Activated CD8-positive, alpha-beta T cell treated with anti-CD3 and anti-CD28 coated beads for 36 hours (primary cell): ENCODE measurements at regions of chr12 and their contacts with region 1.

Region 1: GRCh38 chr12:114508529-114509129 is 102.7 kb upstream of the TBX5 start:
- DNase-seq: peak; percentile 84
- ATAC-seq: no peak
- H3K4me3 Mint-ChIP-seq: no peak overlapping the region
- H3K27ac Mint-ChIP-seq: no peak overlapping the region
- H3K4me1 Mint-ChIP-seq: no peaks in the 10 kb centered on the region
- H3K27me3 Mint-ChIP-seq: peaks cover 17% of the 10 kb centered on the region
- CTCF ChIP-seq: peak; percentile 66

Region 2: DNA sequence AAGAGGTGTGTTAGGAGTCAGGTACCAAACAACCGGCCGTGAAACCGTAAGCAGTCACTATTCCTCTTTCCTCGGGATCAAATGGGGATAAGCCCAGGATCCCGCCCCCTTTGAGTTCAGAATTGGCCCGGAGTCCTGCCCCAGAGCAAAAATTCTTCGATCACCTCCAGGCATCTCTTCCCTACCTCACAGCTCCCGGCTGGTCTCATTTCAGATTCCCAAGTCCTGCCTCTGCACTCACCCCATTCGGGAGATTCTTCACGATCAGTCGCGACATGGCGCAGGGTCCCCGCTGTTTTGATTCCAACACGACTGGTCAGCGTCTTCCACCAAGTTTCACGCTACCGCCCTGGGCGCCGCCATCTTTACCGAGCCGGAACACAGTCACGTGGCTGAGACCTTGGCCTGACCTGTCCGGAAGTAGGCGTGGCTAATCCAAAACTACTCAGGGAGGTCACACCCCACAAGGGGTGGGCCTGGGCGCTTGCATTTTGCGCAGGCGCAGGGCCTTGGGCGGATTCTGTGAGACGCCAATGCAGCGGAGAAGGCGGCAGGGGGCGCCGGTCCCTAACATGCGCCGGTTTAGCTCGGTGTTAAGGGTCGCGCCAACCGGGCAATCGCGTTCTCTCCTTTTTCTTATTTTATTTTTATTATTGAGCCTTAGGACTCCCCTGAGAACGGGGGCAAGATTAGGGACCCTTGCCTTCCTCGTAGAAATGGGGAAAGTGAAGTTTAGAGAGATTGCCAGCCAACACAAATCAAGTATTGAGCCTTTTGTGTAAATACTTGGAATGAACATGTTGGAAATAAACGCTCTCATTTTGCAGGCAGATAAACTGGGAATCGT is 542.5 kb before region 1 on chr12 and contains the start of gene RBM19:
- CTCF ChIA-PET with region 1: interaction called, 21 read pairs
- POLR2A ChIA-PET with region 1: no interaction called
- intact Hi-C with region 1: no loop called
- DNase-seq: peak; percentile 98
- ATAC-seq: peak; percentile 87
- H3K4me3 Mint-ChIP-seq: peak within 1 kb of the TSS; percentile 88
- H3K27ac Mint-ChIP-seq: peak within 1 kb of the TSS; percentile 97
- H3K4me1 Mint-ChIP-seq: peaks cover 49% of the 10 kb centered on the region
- H3K27me3 Mint-ChIP-seq: no peaks in the 10 kb centered on the region
- CTCF ChIP-seq: peak; percentile 76
- total RNA-seq, gene RBM19: 66.9 to 67.7 TPM

Region 3: DNA sequence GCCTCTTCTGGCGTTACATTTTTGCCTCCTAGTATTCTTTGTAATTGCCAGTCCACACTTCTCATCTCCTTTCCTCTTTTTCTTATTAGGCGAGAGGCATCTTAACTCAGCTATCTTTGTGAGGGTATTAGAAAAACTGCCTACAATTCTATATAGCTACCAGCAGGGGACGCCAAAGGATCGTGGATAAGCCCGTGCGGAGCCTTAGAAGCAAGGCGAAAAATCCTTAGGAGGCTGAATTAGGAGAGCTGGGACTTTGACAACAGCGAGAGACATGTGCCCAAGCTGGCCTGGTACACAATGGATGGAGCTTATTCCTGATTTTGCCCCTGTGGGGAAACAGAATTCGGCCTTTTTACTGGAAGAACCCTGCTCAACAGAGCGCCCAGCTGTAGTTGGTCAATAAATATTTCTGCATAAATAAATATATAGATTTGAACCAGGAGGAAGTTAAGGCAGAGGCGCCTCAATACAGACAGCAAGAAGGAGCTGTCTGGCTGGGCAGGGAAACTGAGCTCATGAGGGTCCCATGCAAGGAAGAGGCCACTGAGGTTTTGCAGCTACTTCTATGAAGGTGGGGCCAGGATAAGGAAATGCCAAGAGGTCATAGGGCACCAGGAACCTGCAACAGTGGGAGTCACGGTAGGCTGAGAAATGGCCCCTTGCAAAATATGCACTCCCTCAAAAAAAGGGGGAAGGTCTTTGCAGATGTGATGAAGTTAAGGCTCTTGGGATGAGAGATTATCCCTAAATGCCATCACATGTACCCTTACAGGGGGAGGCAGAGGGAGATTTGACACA is 527.9 kb before region 1 on chr12:
- CTCF ChIA-PET with region 1: interaction called, 79 read pairs
- POLR2A ChIA-PET with region 1: interaction called, 3 read pairs
- intact Hi-C with region 1: loop called (anchors 1 kb)
- DNase-seq: peak; percentile 37
- ATAC-seq: peak; percentile 65
- H3K4me3 Mint-ChIP-seq: no peak overlapping the region
- H3K27ac Mint-ChIP-seq: no peak overlapping the region
- H3K4me1 Mint-ChIP-seq: no peaks in the 10 kb centered on the region
- H3K27me3 Mint-ChIP-seq: peaks cover 21% of the 10 kb centered on the region
- CTCF ChIP-seq: peak; percentile 97

Region 4: DNA sequence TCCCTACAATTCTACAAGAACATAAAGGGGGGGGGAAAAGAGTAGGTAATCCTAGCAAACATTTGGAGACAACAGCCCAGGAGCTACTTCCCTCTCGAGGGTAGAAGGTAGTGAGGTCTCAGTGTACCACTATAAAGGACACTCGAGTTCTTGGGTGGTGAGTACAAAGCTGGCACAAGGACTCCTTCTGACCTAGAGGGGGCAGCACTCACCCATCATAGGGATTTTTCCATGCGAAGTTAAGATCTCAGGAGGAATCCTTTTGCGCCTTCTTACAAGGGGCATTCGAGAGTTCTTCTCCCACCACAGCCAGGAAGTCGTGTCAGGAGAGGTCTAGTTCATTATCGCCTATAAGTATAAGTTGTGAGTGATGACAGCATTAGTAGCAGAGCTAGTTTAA is 342.3 kb before region 1 on chr12:
- CTCF ChIA-PET with region 1: interaction called, 10 read pairs
- POLR2A ChIA-PET with region 1: no interaction called
- intact Hi-C with region 1: no loop called
- DNase-seq: peak; percentile 13
- ATAC-seq: no peak
- H3K4me3 Mint-ChIP-seq: no peak overlapping the region
- H3K27ac Mint-ChIP-seq: no peak overlapping the region
- H3K4me1 Mint-ChIP-seq: no peaks in the 10 kb centered on the region
- H3K27me3 Mint-ChIP-seq: peaks cover 2% of the 10 kb centered on the region
- CTCF ChIP-seq: peak; percentile 11